ENCODE measurements at regions of chr10 and their contacts with region 1.

Region 1: DNA sequence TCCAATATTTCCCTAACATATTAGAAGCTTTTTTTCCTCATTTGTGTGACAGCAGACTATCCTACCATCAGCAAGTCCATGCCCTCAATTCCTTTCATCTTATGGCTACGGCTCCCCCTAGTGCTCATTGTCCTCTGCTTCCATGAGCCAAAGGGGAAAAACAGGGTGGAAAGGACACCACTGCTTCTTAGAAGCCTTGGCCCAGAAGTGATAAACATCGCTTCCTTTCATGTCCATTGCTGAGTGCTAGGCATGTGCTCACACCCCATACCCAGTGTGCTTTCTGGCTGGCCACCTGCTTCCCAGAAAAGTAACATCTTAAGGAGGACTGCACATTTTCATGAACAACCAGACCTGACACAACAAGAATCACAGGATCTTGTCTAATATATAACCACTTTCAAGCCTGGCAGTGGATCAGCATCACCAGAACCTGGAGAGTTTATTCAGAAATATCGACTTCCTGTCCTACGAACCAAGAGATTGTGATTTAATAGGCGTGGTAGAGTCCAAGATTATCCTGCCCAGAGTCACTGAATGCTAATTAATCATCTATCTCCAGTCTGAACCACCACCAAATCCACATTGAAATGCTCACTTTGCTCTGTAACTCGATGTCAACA is 650.5 kb upstream of the SORCS1 start:
- DNase-seq: peak; percentile 70
- H3K4me3 ChIP-seq: no peak overlapping the region
- H3K27ac ChIP-seq: no peak overlapping the region
- H3K4me1 ChIP-seq: no peaks in the 10 kb centered on the region
- H3K27me3 ChIP-seq: no peaks in the 10 kb centered on the region
- CTCF ChIP-seq: peak; percentile 60 to 71 (median 65)
- EP300 ChIP-seq: no peak
- POLR2A ChIP-seq: no peak

Region 2: GRCh38 chr10:106795619-106796018 is 1019.4 kb before region 1 on chr10:
- in situ Hi-C with region 1: loop called in 1 of 4 experiments (anchors 25 kb)
- intact Hi-C with region 1: no loop called
- DNase-seq: peak; percentile 19
- H3K4me3 ChIP-seq: no peak overlapping the region
- H3K27ac ChIP-seq: no peak overlapping the region
- H3K4me1 ChIP-seq: no peaks in the 10 kb centered on the region
- H3K27me3 ChIP-seq: no peaks in the 10 kb centered on the region
- CTCF ChIP-seq: peak; percentile 37 to 51 (median 42)
- EP300 ChIP-seq: no peak
- POLR2A ChIP-seq: no peak

Region 3: DNA sequence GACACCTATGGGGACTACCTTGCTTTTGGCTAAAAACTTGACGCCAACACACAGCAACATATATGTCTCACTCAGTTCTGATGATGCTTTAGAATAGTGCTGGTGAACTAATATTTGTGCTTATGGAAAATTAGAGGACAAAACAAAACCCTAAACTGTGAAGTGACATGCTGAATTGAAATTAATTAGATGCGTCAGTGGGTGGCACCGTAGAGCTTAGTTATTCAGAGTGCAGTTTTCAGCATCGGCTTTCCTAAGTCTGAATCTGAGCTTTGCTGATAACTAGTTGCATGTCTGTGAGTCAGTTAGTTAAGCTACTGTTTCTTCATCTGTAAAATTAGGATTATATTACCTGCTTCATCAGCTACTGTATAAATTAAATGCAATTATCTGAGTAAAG is 405.5 kb before region 1 on chr10:
- in situ Hi-C with region 1: loop called in 3 of 4 experiments (anchors 10 kb)
- intact Hi-C with region 1: no loop called
- DNase-seq: peak; percentile 34
- H3K4me3 ChIP-seq: no peak overlapping the region
- H3K27ac ChIP-seq: no peak overlapping the region
- H3K4me1 ChIP-seq: no peaks in the 10 kb centered on the region
- H3K27me3 ChIP-seq: no peaks in the 10 kb centered on the region
- CTCF ChIP-seq: peak in 4 of 5 experiments; percentile 26 to 52 (median 32)
- EP300 ChIP-seq: no peak
- POLR2A ChIP-seq: no peak

Region 4: DNA sequence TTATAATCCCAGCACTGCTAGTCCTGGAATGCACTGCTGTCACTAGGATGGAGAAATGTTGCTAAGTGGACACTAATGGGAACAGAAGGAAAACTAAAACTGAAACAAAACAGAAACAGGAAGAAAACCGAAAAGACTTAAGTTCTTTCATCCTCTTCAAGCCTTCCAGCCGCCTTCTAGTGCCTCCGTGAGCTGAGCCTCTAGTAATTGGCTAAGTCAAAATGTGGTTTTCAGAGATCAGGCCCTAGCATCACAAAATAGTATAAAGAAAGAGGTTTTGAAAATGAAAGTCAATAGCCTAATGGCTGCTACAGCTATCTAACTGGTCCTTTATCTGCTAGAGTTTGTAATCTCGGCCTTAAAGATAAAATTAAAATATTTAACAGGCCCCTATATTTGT is 396.6 kb before region 1 on chr10:
- in situ Hi-C with region 1: loop called in 1 of 4 experiments (anchors 10 kb)
- intact Hi-C with region 1: no loop called
- DNase-seq: no peak
- H3K4me3 ChIP-seq: no peak overlapping the region
- H3K27ac ChIP-seq: no peak overlapping the region
- H3K4me1 ChIP-seq: no peaks in the 10 kb centered on the region
- H3K27me3 ChIP-seq: no peaks in the 10 kb centered on the region
- CTCF ChIP-seq: no peak
- EP300 ChIP-seq: no peak
- POLR2A ChIP-seq: no peak

Region 5: GRCh38 chr10:107671960-107672359 is 143.0 kb before region 1 on chr10:
- in situ Hi-C with region 1: no loop called
- intact Hi-C with region 1: no loop called
- DNase-seq: no peak
- H3K4me3 ChIP-seq: no peak overlapping the region
- H3K27ac ChIP-seq: no peak overlapping the region
- H3K4me1 ChIP-seq: no peaks in the 10 kb centered on the region
- H3K27me3 ChIP-seq: no peaks in the 10 kb centered on the region
- CTCF ChIP-seq: no peak
- EP300 ChIP-seq: no peak
- POLR2A ChIP-seq: no peak

Measured in transverse colon (tissue), 4 donors.